Activated CD8-positive, alpha-beta T cell treated with anti-CD3 and anti-CD28 coated beads for 36 hours (primary cell): ENCODE measurements at regions of chr21 and their contacts with region 1.

Region 1: GRCh38 chr21:39349211-39350093 is 564 bp upstream of the HMGN1 start:
- DNase-seq: peak; percentile 98
- ATAC-seq: peak; percentile 87
- H3K4me3 Mint-ChIP-seq: peak overlapping the region; percentile 92
- H3K27ac Mint-ChIP-seq: peak overlapping the region; percentile 100
- H3K4me1 Mint-ChIP-seq: peaks cover 32% of the 10 kb centered on the region
- H3K27me3 Mint-ChIP-seq: no peaks in the 10 kb centered on the region
- CTCF ChIP-seq: no peak

Region 2: GRCh38 chr21:39379986-39380891 is 30.8 kb after region 1 on chr21:
- CTCF ChIA-PET with region 1: interaction called, 4 read pairs
- POLR2A ChIA-PET with region 1: interaction called, 21 read pairs
- intact Hi-C with region 1: loop called (anchors 5 kb)
- DNase-seq: peak; percentile 95
- ATAC-seq: peak; percentile 98
- H3K4me3 Mint-ChIP-seq: peak overlapping the region; percentile 92
- H3K27ac Mint-ChIP-seq: peak overlapping the region; percentile 85
- H3K4me1 Mint-ChIP-seq: peaks cover 19% of the 10 kb centered on the region
- H3K27me3 Mint-ChIP-seq: peaks cover 1% of the 10 kb centered on the region
- CTCF ChIP-seq: no peak

Region 3: DNA sequence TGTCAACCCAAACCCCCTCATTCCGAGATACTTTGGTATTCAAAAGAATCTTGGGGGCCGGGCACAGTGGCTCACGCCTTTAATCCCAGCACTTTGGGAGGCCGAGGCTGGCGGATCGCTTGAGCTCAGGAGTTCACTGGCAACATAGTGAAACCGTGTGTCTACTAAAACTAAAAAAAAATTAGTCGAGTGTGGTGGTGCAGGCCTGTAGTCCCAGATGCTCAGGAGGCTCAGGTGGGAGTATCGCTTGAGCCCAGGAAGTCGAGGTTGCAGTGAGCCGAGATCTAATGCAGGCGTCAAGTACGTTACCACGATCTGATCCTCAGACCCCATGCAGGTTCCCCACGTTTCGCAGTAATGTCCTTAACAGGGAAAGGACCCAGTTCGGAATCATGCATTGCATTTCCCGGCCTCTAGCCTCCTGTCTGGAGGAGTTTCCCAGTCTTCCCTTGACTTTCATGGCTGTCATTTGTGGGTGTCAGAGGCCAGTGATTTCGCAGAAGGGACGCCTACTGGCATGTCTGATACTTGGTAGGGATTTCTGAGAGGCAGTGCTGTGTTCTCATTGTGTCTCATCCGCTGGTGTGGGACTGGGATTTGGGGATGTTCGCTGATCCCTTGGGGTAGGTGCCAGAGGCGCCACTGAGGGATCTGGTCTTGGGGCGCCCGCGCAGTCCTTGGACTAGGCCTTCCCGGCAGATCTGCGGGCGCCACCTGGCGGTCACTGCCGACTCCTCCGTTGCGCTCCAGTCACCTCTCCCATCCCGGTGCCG is 38.8 kb after region 1 on chr21:
- CTCF ChIA-PET with region 1: interaction called, 9 read pairs
- POLR2A ChIA-PET with region 1: interaction called, 9 read pairs
- intact Hi-C with region 1: loop called (anchors 5 kb)
- DNase-seq: peak; percentile 93
- ATAC-seq: peak; percentile 75
- H3K4me3 Mint-ChIP-seq: peak overlapping the region; percentile 77
- H3K27ac Mint-ChIP-seq: peak overlapping the region; percentile 92
- H3K4me1 Mint-ChIP-seq: peaks cover 34% of the 10 kb centered on the region
- H3K27me3 Mint-ChIP-seq: no peaks in the 10 kb centered on the region
- CTCF ChIP-seq: peak; percentile 98

Region 4: GRCh38 chr21:39518138-39518846 is 168.8 kb after region 1 on chr21:
- CTCF ChIA-PET with region 1: no interaction called
- POLR2A ChIA-PET with region 1: no interaction called
- intact Hi-C with region 1: no loop called
- DNase-seq: peak; percentile 64
- ATAC-seq: peak; percentile 88
- H3K4me3 Mint-ChIP-seq: no peak overlapping the region
- H3K27ac Mint-ChIP-seq: no peak overlapping the region
- H3K4me1 Mint-ChIP-seq: peaks cover 3% of the 10 kb centered on the region
- H3K27me3 Mint-ChIP-seq: no peaks in the 10 kb centered on the region
- CTCF ChIP-seq: peak; percentile 97